Natural killer cell (primary cell): ENCODE measurements at regions of chr3 and their contacts with region 1.

Region 1: DNA sequence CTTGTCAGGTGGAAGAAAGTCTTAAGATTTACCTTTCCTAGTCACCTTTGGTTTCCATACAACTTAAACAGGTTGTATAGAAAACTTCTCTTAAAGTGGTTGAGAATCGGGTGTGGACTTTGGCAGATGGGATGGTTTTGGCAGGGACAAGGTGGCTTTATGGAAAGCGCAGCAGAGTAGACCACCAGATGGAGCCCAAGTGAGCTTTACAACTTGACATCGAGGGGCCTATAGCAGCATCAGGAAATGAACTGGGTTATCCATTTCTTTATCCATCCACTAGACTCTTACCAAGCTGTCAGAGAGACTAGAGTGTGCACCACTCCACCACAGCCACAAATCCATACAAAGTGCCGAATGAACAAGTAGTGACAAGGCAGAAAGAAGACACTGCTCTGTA is 85.3 kb upstream of the MBNL1 start:
- DNase-seq: peak; percentile 25 to 82
- ATAC-seq: peak; percentile 62 to 84 (median 83)
- H3K4me3 ChIP-seq: no peak overlapping the region
- H3K4me3 Mint-ChIP-seq: no peak overlapping the region
- H3K27ac ChIP-seq: no peak overlapping the region
- H3K27ac Mint-ChIP-seq: peak overlapping the region in 1 of 2 donors; percentile 27
- H3K4me1 ChIP-seq: peaks cover 9% of the 10 kb centered on the region
- H3K4me1 Mint-ChIP-seq: peaks cover 40 to 53% of the 10 kb centered on the region in 2 donors
- H3K27me3 ChIP-seq: no peaks in the 10 kb centered on the region
- H3K27me3 Mint-ChIP-seq: no peaks in the 10 kb centered on the region
- CTCF ChIP-seq: peak; percentile 66

Region 2: DNA sequence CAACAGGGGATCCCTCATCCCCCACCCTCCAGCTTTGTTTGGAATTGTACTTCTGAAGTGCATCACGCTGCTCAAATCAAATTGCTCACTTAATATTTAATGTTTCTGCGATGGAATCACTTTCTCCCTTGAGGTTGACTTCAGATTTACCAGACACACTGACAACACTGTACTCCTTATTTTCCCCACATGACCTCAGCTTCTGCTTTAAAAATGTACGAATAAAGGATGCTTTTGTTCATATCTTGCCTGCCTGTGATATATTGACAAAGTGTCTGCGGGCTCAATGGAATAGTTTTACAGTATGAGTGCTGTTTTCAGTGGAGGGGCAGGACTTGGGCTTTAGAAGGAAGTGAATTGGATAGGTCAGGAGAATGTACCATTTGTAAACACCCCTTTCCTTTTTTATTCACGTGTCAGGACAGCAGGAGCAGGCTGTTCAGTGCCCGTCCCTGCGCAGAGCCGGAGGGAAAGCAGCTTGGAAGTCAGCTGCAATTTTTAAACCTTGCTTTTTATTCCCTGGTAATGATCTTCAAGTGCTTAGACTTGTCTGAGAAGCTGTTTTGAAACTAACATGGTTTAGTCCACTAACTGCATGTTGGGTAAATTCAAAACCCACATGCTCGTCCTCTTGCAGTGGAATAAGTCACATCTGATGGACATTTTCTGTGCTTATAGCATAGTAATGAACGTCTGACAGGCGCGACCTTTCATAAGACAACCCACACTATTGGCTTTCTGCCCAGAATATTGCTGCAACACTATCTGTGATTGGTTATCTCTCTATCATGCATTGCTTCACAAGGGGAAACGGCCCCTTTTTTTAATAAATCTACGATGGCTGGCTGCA is 115.1 kb after region 1 on chr3:
- intact Hi-C with region 1: loop called (anchors 5 kb)
- DNase-seq: peak; percentile 35 to 90
- ATAC-seq: peak; percentile 71 to 86 (median 78)
- H3K4me3 ChIP-seq: no peak overlapping the region
- H3K4me3 Mint-ChIP-seq: peak overlapping the region; percentile 71
- H3K27ac ChIP-seq: peak overlapping the region; percentile 60
- H3K27ac Mint-ChIP-seq: peak overlapping the region; percentile 76 to 89
- H3K4me1 ChIP-seq: peaks cover 42% of the 10 kb centered on the region
- H3K4me1 Mint-ChIP-seq: peaks cover 57 to 76% of the 10 kb centered on the region in 2 donors
- H3K27me3 ChIP-seq: no peaks in the 10 kb centered on the region
- H3K27me3 Mint-ChIP-seq: no peaks in the 10 kb centered on the region
- CTCF ChIP-seq: no peak

Region 3: GRCh38 chr3:152444029-152444641 is 260.7 kb after region 1 on chr3:
- intact Hi-C with region 1: loop called (anchors 1 kb)
- DNase-seq: peak in 1 of 2 donors; percentile 68
- ATAC-seq: peak; percentile 58 to 72 (median 70)
- H3K4me3 ChIP-seq: no peak overlapping the region
- H3K4me3 Mint-ChIP-seq: no peak overlapping the region
- H3K27ac ChIP-seq: peak overlapping the region; percentile 14
- H3K27ac Mint-ChIP-seq: peak overlapping the region; percentile 84 to 85
- H3K4me1 ChIP-seq: peaks cover 10% of the 10 kb centered on the region
- H3K4me1 Mint-ChIP-seq: peaks cover 61% of the 10 kb centered on the region in 2 donors
- H3K27me3 ChIP-seq: no peaks in the 10 kb centered on the region
- H3K27me3 Mint-ChIP-seq: no peaks in the 10 kb centered on the region
- CTCF ChIP-seq: peak; percentile 70

Region 4: GRCh38 chr3:152769523-152769922 is 586.0 kb after region 1 on chr3:
- intact Hi-C with region 1: no loop called
- DNase-seq: no peak
- ATAC-seq: no peak
- H3K4me3 ChIP-seq: no peak overlapping the region
- H3K4me3 Mint-ChIP-seq: no peak overlapping the region
- H3K27ac ChIP-seq: no peak overlapping the region
- H3K27ac Mint-ChIP-seq: no peak overlapping the region
- H3K4me1 ChIP-seq: no peaks in the 10 kb centered on the region
- H3K4me1 Mint-ChIP-seq: no peaks in the 10 kb centered on the region
- H3K27me3 ChIP-seq: no peaks in the 10 kb centered on the region
- H3K27me3 Mint-ChIP-seq: no peaks in the 10 kb centered on the region
- CTCF ChIP-seq: no peak